Left cardiac atrium (tissue), 4 donors: ENCODE measurements at regions of chr11 and their contacts with region 1.

Region 1: GRCh38 chr11:67507864-67508485 is at the start of gene CDK2AP2:
- DNase-seq: peak; percentile 100
- ATAC-seq: peak; percentile 84 to 85
- total RNA-seq, gene CDK2AP2: 44.8 to 60.9 TPM

Region 2: DNA sequence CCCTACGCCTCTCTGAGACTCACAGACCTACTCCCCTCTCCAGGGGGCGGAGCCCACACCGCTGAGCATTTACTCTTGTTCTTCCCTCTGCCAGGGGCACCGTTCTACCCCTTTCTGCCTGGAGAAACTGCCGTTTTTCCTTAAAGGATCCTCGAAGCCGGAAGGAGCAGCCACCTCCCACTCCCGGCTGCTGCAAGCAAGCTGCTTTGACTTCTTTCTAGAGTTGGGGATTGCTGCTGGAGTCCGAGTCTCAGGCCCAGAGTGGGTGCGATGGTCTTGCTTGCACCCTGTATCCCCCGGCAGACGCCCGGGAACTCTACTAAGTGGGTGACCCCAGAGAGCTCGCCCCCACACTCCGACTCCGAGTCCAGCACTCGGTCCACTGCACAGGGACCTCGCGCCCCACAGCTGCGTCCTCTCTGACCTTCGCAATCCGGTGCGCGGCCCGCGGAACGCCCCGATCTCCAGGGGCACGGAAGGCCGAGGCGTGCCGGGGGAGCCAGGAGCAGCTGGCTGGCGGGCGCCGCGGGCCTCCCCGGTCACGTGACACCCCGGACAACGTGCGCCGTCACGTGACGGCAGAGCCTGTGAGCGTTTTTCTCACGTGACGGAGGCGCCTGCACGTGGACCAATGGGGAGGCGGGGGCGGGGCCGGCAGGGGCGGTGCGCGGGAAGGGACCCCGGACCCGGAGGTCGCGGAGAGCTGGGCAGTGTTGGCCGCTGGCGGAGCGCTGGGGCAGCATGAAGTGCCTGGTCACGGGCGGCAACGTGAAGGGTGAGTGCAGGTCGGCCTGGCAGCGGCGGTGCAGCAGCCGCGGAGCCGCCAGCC is 116.5 kb before region 1 on chr11 and contains the start of gene RAD9A:
- intact Hi-C with region 1: loop called in 1 of 2 experiments (anchors 10 kb)
- DNase-seq: peak; percentile 98
- ATAC-seq: peak; percentile 87 to 94
- total RNA-seq, gene RAD9A: 6.2 to 9.0 TPM

Region 3: DNA sequence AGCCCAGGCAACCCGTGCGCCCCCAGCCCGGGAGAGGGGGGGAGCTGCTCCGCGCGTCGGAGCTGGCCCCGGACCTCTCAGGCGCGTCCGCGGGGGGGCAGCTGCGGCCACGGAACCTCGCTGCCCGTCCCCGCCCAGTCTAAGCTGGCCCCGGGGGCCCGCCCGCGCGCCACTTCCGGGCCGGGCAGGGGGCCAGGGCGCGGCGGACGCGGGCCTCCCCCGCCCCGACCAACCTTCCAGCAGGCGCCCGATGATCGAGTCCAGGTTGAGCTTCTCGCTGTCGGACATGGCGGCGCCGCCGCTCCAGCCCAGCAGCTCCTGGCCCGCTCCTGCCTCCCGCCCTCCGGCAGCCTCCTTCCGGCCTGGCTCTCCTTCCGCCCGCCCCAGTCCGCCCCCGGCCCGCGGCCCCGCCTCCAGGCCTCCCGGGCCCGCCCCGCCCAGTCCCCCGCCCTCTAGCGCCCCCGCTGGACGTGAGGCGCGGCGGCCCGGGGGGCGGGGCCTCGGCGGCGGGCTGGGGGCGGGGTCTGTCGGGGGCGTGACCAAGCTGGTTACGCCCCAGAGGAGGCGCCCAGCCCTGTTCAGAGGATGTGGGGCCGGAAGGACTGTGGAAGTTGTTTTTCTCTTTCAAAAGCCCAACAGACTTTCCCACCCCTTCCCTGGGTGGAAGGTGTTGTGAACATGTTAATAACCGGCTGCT is 106.3 kb before region 1 on chr11 and contains the start of gene PPP1CA:
- intact Hi-C with region 1: loop called (anchors 5 to 10 kb)
- DNase-seq: peak; percentile 93
- ATAC-seq: peak; percentile 87 to 90
- total RNA-seq, gene PPP1CA: 86.7 to 94.1 TPM

Region 4: DNA sequence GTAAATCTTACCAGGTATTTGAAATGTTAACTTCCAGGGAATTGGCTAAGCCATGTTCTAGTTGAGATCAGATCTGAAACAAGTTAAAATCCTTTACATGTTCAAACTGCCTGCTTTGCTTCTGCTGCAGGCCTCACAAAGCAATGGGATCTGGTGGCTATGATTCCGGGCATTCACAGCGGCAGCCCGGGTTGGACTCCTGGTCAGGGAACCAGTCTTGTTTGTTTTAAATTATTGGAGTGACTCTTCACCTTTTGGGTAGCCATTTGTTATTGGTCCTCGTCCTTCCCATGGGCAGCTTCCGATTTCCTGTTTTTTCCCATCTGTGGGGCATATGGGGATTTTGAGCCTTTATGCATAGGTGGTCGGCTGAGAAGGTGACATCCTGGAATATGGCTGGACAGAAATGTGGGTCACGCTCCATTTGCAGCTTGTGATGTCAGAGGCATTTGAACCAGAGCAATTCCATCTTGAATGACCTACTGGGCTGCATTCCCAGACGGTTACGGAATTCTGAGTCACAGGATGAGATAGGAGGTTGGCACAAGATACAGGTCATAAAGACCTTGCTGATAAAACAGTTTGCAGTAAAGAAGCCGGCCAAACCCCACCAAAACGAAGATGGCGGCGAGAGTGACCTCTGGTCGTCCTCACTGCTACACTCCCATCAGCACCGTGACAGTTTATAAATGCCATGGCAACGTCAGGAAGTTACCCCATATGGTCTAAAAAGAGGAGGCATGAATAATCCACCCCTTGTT is 55.6 kb after region 1 on chr11:
- intact Hi-C with region 1: loop called in 1 of 2 experiments (anchors 5 kb)
- DNase-seq: peak; percentile 81
- ATAC-seq: peak; percentile 82 to 89

Region 5: DNA sequence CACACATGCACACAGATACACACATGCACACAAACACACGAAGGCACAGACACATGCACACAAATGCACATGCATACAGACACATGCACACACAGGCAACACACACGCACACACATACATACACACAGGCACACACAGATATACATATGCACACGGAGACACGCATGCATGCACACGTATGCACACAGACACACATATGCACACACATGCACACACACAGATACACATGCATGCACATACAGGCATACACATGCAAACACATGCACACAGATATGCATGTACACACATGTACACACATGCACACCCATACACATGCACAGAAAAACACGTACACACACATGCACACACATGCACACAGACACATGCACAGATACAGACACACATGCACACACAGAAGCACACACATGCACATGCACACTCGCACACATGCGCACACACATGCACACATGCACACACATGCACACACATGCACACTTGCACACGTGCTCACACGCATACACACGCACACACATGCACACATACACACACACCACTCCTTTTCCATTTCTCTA is 237.3 kb after region 1 on chr11:
- intact Hi-C with region 1: no loop called
- DNase-seq: no peak
- ATAC-seq: no peak